PC-9 (cell line): ENCODE measurements at regions of chrX and their contacts with region 1.

Region 1: GRCh38 chrX:129876771-129877305 is 29.1 kb upstream of the UTP14A start:
- DNase-seq: peak; percentile 53 to 95
- H3K4me3 ChIP-seq: no peak overlapping the region
- H3K27ac ChIP-seq: peak overlapping the region; percentile 82
- H3K4me1 ChIP-seq: peaks cover 26% of the 10 kb centered on the region
- H3K27me3 ChIP-seq: no peaks in the 10 kb centered on the region
- CTCF ChIP-seq: no peak

Region 2: GRCh38 chrX:129717892-129718291 is 158.9 kb before region 1 on chrX:
- CTCF ChIA-PET with region 1: no interaction called
- POLR2A ChIA-PET with region 1: no interaction called
- intact Hi-C with region 1: no loop called
- DNase-seq: no peak
- H3K4me3 ChIP-seq: no peak overlapping the region
- H3K27ac ChIP-seq: no peak overlapping the region
- H3K4me1 ChIP-seq: peaks cover 5% of the 10 kb centered on the region; the same call in 1 of the 2 replicates
- H3K27me3 ChIP-seq: no peaks in the 10 kb centered on the region; the same call in 1 of the 2 replicates
- CTCF ChIP-seq: no peak

Region 3: DNA sequence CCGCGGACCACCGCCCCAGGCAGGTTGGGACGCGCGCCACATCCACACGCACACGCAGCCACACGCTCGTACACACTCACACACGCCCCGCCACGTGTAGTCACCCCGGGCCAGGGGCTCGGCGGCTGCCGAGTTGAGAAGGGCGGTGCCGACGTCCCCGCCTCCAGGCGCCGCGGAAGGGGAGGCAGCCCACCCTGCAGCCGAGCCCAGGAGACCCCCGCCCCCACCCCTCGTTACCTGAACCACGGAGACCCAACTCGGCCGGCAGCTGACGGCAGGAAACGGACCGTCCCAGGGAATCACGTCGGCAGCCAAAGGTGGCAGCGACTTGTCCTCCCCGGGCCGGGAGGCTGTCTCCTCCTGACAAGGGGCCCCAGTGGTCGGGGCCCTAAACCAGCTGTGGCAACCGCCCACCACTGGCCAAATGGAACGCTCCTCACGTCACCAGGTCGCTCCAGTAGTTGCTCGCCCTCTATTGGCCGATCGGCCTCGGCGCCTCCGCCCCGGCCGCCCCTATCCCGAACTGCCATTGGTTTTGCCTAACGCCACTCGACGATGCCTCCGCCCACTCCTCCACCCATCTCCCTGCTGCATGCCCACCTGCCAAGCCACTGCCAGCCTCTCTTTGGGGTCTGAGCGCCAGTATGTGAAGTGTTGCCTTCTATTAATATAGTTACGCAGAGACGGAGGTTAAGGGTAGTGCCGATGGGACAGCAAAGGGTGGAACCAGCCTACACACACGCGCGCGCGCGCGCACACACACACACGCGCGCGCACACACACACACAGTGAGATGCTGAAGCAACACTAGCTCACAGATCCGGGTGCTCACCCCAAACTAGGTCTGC is 33.2 kb before region 1 on chrX and contains the start of gene ZDHHC9:
- CTCF ChIA-PET with region 1: interaction called, 3 read pairs
- POLR2A ChIA-PET with region 1: interaction called, 9 read pairs
- intact Hi-C with region 1: loop called (anchors 1 kb)
- DNase-seq: peak; percentile 86 to 96
- H3K4me3 ChIP-seq: peak within 1 kb of the TSS; percentile 90
- H3K27ac ChIP-seq: peak within 1 kb of the TSS; percentile 97
- H3K4me1 ChIP-seq: peaks cover 52% of the 10 kb centered on the region
- H3K27me3 ChIP-seq: no peaks in the 10 kb centered on the region
- CTCF ChIP-seq: 0 out of 2 replicates have a peak, but pooled peaks have one; percentile 25
- total RNA-seq, gene ZDHHC9: 84.2 and 108 TPM in 2 replicates